AG04450 (cell line): ENCODE measurements at regions of chr5 and their contacts with region 1.

Region 1: GRCh38 chr5:157948738-157949410 is 89.9 kb upstream of the CLINT1 start:
- DNase-seq: peak; percentile 85
- H3K4me3 ChIP-seq: no peak overlapping the region
- H3K27ac ChIP-seq: no peak overlapping the region
- H3K27me3 ChIP-seq: no peaks in the 10 kb centered on the region
- CTCF ChIP-seq: peak; percentile 94

Region 2: DNA sequence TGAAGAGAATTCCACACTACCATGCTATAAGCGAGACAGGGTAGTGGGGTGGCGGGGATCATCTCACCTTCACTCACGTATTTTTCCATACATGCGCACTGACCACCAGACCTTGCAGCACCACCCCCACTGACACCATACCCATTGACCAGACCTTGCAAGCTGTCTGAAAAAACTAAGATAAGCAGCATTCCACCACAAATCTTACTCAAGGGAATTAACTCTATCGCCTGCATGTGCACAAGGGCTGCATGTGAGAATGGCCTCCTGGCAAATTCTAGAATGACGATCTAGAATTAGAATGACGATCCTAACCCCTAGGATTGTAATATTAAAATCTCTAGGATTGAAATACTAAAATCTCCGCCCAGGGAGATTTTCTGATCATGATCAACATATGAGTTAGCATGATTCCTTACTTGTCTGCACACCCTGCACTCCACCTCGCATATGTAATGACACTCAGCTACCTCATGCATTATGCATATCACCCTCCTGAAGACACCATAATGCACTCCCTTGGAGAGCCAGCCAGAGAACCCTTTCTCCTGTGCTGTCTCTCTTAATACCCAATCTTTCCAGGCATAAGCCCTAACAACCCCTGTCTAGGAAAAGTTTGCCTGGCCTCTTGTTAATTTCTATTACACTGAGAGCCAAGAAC is 308.3 kb before region 1 on chr5:
- CTCF ChIA-PET with region 1: no interaction called
- POLR2A ChIA-PET with region 1: no interaction called
- DNase-seq: no peak
- H3K4me3 ChIP-seq: no peak overlapping the region
- H3K27ac ChIP-seq: no peak overlapping the region
- H3K27me3 ChIP-seq: no peaks in the 10 kb centered on the region
- CTCF ChIP-seq: no peak

Region 3: DNA sequence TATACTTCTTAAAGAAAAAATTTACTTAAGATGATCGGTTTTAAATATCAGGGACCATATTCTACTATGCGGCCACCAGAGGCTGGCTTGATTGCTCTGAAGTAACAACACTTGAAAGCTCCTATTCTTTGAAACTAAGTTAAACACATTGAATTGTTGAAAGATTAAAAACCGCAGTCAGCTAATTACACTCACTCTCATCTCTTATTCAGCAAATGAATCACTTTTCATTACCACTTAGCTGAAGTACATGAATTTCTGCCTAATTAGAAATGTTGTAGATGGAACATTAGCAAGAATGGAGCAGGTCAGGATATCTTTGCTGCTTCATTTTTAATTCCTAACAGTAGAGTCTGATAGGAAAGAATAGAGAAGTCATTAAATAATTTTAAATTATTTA is 163.1 kb before region 1 on chr5:
- CTCF ChIA-PET with region 1: interaction called, 11 read pairs
- POLR2A ChIA-PET with region 1: no interaction called
- DNase-seq: no peak
- H3K4me3 ChIP-seq: no peak overlapping the region
- H3K27ac ChIP-seq: no peak overlapping the region
- H3K27me3 ChIP-seq: no peaks in the 10 kb centered on the region
- CTCF ChIP-seq: no peak

Region 4: GRCh38 chr5:157820593-157821252 is 128.2 kb before region 1 on chr5:
- CTCF ChIA-PET with region 1: interaction called, 80 read pairs
- POLR2A ChIA-PET with region 1: no interaction called
- DNase-seq: peak; percentile 6
- H3K4me3 ChIP-seq: no peak overlapping the region
- H3K27ac ChIP-seq: no peak overlapping the region
- H3K27me3 ChIP-seq: no peaks in the 10 kb centered on the region
- CTCF ChIP-seq: peak; percentile 68

Region 5: DNA sequence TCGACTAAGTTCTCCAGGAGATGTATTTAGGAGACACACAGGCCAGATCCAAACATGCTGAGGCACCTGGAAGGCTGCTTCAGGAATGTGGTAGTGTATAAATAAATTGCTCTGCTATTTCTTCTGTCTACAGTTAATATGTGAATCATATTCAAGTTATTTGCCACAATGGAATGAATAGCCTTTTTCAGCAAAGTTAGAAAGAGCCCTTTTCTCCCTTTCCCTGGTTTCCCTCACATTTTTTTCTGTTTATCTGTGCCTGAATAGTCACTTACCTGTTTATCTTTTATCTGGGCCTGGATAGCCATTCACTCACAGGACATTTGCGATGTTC is 45.8 kb before region 1 on chr5:
- CTCF ChIA-PET with region 1: interaction called, 11 read pairs
- POLR2A ChIA-PET with region 1: no interaction called
- DNase-seq: no peak
- H3K4me3 ChIP-seq: no peak overlapping the region
- H3K27ac ChIP-seq: no peak overlapping the region
- H3K27me3 ChIP-seq: no peaks in the 10 kb centered on the region
- CTCF ChIP-seq: no peak

Region 6: GRCh38 chr5:157961828-157962590 is 13.1 kb after region 1 on chr5:
- CTCF ChIA-PET with region 1: interaction called, 18 read pairs
- POLR2A ChIA-PET with region 1: no interaction called
- DNase-seq: no peak
- H3K4me3 ChIP-seq: no peak overlapping the region
- H3K27ac ChIP-seq: no peak overlapping the region
- H3K27me3 ChIP-seq: no peaks in the 10 kb centered on the region
- CTCF ChIP-seq: no peak

Region 7: DNA sequence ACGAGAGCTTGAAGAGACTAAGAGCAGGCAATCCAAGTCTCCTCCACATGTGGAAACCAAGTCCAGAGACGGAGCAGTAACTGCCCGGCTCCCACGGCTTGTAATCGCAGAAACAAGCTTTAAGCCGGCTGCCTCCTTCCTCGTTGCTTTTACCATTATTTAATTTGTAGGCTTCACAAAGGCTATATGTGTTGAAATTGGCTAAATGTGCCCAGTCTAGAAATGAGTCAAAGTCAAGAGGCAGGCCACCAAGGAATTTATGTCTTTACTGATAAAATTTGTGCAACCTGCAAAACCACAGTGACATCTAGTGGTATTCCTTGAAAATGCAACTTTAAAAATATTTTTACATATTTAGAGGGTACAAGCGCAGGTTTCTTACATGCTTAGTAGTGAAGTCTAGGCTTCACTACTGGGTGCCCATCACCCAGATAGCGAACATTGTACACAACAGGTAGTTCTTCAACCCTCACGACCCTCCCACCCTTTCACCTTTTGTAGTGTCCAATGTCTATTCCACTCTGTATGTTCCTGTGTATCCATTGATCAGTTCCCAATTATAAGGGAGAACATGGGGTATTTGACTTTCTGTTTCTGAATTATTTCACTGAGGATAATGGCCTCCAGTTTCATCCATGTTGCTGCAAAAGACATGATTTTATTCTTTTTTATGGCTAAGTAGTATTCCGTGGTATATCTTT is 1184.3 kb after region 1 on chr5:
- CTCF ChIA-PET with region 1: interaction called, 11 read pairs
- POLR2A ChIA-PET with region 1: no interaction called
- DNase-seq: peak; percentile 15
- H3K4me3 ChIP-seq: no peak overlapping the region
- H3K27ac ChIP-seq: no peak overlapping the region
- H3K27me3 ChIP-seq: peaks cover 11% of the 10 kb centered on the region
- CTCF ChIP-seq: peak; percentile 80